CD4-positive, alpha-beta memory T cell (primary cell): ENCODE measurements at regions of chr2 and their contacts with region 1.

Region 1: GRCh38 chr2:64330281-64331113 is 123.5 kb upstream of the LGALSL start:
- DNase-seq: peak; percentile 70 to 79 (median 74)
- H3K4me3 ChIP-seq: no peak overlapping the region
- H3K4me3 Mint-ChIP-seq: peak overlapping the region in 7 of 8 donors; percentile 25 to 83 (median 75)
- H3K27ac ChIP-seq: no peak overlapping the region
- H3K27ac Mint-ChIP-seq: peak overlapping the region in 6 of 7 donors; percentile 33 to 92 (median 86)
- H3K4me1 ChIP-seq: peaks cover 38% of the 10 kb centered on the region
- H3K4me1 Mint-ChIP-seq: peaks cover 28 to 46% (median 34%) of the 10 kb centered on the region in 4 donors
- H3K27me3 ChIP-seq: no peaks in the 10 kb centered on the region
- H3K27me3 Mint-ChIP-seq: no peaks in the 10 kb centered on the region

Region 2: DNA sequence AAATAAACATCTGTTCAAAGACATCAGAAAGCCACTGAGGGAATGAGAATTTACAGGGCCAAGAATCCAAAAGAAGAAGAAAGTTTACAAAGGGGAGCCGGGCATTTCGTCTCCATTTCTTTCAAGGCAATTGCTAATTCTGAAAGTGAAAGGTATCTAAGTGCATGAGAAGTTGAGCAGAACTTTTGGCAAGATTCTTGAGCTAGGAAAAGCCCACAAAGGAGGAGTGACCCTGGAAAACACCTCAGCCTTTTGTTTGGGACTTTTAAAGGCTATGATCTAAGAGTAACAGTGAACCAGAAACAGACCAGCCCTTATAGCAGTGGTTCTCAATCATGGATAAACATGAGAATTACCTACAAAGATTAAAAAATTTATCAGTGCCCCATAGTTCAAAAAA is 654.4 kb before region 1 on chr2:
- CTCF ChIA-PET with region 1: no interaction called
- POLR2A ChIA-PET with region 1: no interaction called
- intact Hi-C with region 1: no loop called
- DNase-seq: no peak
- H3K4me3 ChIP-seq: no peak overlapping the region
- H3K4me3 Mint-ChIP-seq: no peak overlapping the region
- H3K27ac ChIP-seq: no peak overlapping the region
- H3K27ac Mint-ChIP-seq: no peak overlapping the region
- H3K4me1 ChIP-seq: no peaks in the 10 kb centered on the region
- H3K4me1 Mint-ChIP-seq: peaks cover 0 to 10% (median 4%) of the 10 kb centered on the region in 4 donors
- H3K27me3 ChIP-seq: no peaks in the 10 kb centered on the region
- H3K27me3 Mint-ChIP-seq: peaks cover 17 to 25% of the 10 kb centered on the region in 2 donors

Region 3: GRCh38 chr2:64052468-64053241 is 277.8 kb before region 1 on chr2:
- CTCF ChIA-PET with region 1: interaction called, 341 read pairs
- POLR2A ChIA-PET with region 1: interaction called, 77 read pairs
- intact Hi-C with region 1: loop called (anchors 1 kb)
- DNase-seq: peak in 2 of 5 donors; percentile 11 to 17
- H3K4me3 ChIP-seq: no peak overlapping the region
- H3K4me3 Mint-ChIP-seq: peak overlapping the region in 1 of 8 donors; percentile 30
- H3K27ac ChIP-seq: no peak overlapping the region
- H3K27ac Mint-ChIP-seq: peak overlapping the region in 4 of 7 donors; percentile 16 to 34 (median 24)
- H3K4me1 ChIP-seq: peaks cover 28% of the 10 kb centered on the region
- H3K4me1 Mint-ChIP-seq: peaks cover 16 to 42% (median 29%) of the 10 kb centered on the region in 4 donors
- H3K27me3 ChIP-seq: no peaks in the 10 kb centered on the region
- H3K27me3 Mint-ChIP-seq: no peaks in the 10 kb centered on the region

Region 4: GRCh38 chr2:64222351-64222750 is 108.1 kb before region 1 on chr2:
- CTCF ChIA-PET with region 1: interaction called, 20 read pairs
- POLR2A ChIA-PET with region 1: interaction called, 3 read pairs
- intact Hi-C with region 1: no loop called
- DNase-seq: no peak
- H3K4me3 ChIP-seq: no peak overlapping the region
- H3K4me3 Mint-ChIP-seq: no peak overlapping the region
- H3K27ac ChIP-seq: no peak overlapping the region
- H3K27ac Mint-ChIP-seq: peak overlapping the region in 1 of 7 donors; percentile 43
- H3K4me1 ChIP-seq: peaks cover 19% of the 10 kb centered on the region
- H3K4me1 Mint-ChIP-seq: peaks cover 10 to 24% (median 19%) of the 10 kb centered on the region in 4 donors
- H3K27me3 ChIP-seq: no peaks in the 10 kb centered on the region
- H3K27me3 Mint-ChIP-seq: no peaks in the 10 kb centered on the region

Region 5: GRCh38 chr2:64354857-64355680 is 24.6 kb after region 1 on chr2:
- CTCF ChIA-PET with region 1: interaction called, 11 read pairs
- POLR2A ChIA-PET with region 1: no interaction called
- intact Hi-C with region 1: no loop called
- DNase-seq: no peak
- H3K4me3 ChIP-seq: no peak overlapping the region
- H3K4me3 Mint-ChIP-seq: no peak overlapping the region
- H3K27ac ChIP-seq: no peak overlapping the region
- H3K27ac Mint-ChIP-seq: no peak overlapping the region
- H3K4me1 ChIP-seq: no peaks in the 10 kb centered on the region
- H3K4me1 Mint-ChIP-seq: peaks cover 0 to 3% (median under 1%) of the 10 kb centered on the region in 4 donors
- H3K27me3 ChIP-seq: no peaks in the 10 kb centered on the region
- H3K27me3 Mint-ChIP-seq: peaks cover 8 to 32% of the 10 kb centered on the region in 2 donors

Region 6: DNA sequence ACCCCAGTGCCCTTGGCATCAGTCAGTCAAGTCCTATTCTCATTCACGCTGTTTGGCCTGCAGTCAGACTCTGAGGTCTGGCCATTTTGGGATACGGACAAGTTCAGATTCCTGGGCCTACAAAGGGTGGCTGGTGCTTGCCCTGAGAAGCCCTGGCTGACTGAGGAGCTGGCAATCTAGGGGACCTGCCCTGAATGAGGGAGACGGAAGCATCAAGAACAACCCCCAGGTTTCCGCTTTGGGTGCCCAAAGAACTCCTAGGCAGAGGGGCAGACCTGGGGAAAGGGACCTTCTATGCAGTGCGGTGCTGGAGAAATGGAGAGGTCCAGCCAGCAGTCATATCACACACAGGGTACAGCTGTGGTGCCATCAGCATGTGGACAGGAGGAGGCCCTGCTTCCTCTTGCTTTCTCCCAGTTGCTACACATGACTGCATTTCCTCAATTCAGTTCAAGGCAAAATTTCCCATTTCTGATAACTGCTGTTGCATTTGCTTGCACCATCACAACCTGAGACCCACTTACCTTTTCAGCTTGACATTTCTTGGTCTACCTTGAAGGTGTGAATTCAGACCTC is 52.6 kb after region 1 on chr2:
- CTCF ChIA-PET with region 1: no interaction called
- POLR2A ChIA-PET with region 1: no interaction called
- intact Hi-C with region 1: no loop called
- DNase-seq: no peak
- H3K4me3 ChIP-seq: no peak overlapping the region
- H3K4me3 Mint-ChIP-seq: no peak overlapping the region
- H3K27ac ChIP-seq: no peak overlapping the region
- H3K27ac Mint-ChIP-seq: no peak overlapping the region
- H3K4me1 ChIP-seq: no peaks in the 10 kb centered on the region
- H3K4me1 Mint-ChIP-seq: no peaks in the 10 kb centered on the region
- H3K27me3 ChIP-seq: no peaks in the 10 kb centered on the region
- H3K27me3 Mint-ChIP-seq: peaks cover 2 to 7% of the 10 kb centered on the region in 2 donors

Region 7: GRCh38 chr2:64523666-64524603 is 193.4 kb after region 1 on chr2 and contains the start of gene AFTPH:
- CTCF ChIA-PET with region 1: interaction called, 59 read pairs
- POLR2A ChIA-PET with region 1: interaction called, 25 read pairs
- intact Hi-C with region 1: loop called (anchors 1 kb)
- DNase-seq: peak; percentile 98 to 100 (median 99)
- H3K4me3 ChIP-seq: peak within 1 kb of the TSS; percentile 94 to 95
- H3K4me3 Mint-ChIP-seq: peak within 1 kb of the TSS; percentile 99 to 100 (median 99)
- H3K27ac ChIP-seq: peak within 1 kb of the TSS; percentile 96
- H3K27ac Mint-ChIP-seq: peak within 1 kb of the TSS; percentile 97 to 99 (median 99)
- H3K4me1 ChIP-seq: peaks cover 40% of the 10 kb centered on the region
- H3K4me1 Mint-ChIP-seq: peaks cover 32 to 50% (median 39%) of the 10 kb centered on the region in 4 donors
- H3K27me3 ChIP-seq: no peaks in the 10 kb centered on the region
- H3K27me3 Mint-ChIP-seq: peaks cover 0 to 2% of the 10 kb centered on the region in 2 donors
- total RNA-seq, gene AFTPH: 48.3 to 48.9 TPM

Region 8: DNA sequence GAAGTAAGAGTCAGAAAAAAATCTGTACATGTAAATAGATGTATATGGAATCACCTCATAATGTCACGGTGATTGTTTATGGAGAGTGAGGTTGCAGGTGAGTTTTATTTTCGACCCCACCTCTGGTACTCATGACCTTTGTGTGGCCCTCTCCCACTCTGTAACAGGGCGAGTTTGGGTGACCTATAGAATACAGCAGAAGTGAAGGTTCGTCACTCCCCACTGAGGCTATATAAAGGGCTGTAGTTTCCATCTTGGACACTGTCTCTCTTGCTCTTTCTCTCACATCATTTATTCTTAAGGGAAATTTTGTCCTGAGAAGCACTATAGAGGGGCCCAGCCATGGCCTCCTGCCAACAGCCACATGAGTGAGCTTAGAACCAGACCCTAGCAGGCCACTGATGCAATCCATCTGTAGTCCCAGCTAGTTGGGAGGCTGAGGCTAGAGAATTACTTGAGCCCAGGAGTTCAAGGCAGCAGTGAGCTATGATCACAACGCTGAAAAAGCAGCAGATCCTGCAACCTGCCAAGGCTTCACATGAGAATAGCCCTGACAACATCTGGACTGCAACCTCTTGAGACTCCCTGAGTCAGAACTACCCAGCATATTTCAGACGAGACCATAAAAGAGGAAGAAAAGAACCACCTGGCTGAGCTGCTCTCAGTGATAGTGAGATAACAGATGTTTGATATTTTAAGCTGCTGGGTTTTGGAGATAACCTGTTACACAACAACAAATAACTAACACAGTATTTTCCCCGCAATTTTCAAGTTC is 584.4 kb after region 1 on chr2:
- CTCF ChIA-PET with region 1: interaction called, 4 read pairs
- POLR2A ChIA-PET with region 1: no interaction called
- intact Hi-C with region 1: loop called (anchors 2 kb)
- DNase-seq: no peak
- H3K4me3 ChIP-seq: no peak overlapping the region
- H3K4me3 Mint-ChIP-seq: no peak overlapping the region
- H3K27ac ChIP-seq: no peak overlapping the region
- H3K27ac Mint-ChIP-seq: peak overlapping the region in 1 of 7 donors; percentile 43
- H3K4me1 ChIP-seq: peaks cover 10% of the 10 kb centered on the region
- H3K4me1 Mint-ChIP-seq: peaks cover 6 to 21% (median 10%) of the 10 kb centered on the region in 4 donors
- H3K27me3 ChIP-seq: no peaks in the 10 kb centered on the region
- H3K27me3 Mint-ChIP-seq: peaks cover 0 to 1% of the 10 kb centered on the region in 2 donors